ENCODE measurements at regions of chr1 and their contacts with region 1.

Region 1: DNA sequence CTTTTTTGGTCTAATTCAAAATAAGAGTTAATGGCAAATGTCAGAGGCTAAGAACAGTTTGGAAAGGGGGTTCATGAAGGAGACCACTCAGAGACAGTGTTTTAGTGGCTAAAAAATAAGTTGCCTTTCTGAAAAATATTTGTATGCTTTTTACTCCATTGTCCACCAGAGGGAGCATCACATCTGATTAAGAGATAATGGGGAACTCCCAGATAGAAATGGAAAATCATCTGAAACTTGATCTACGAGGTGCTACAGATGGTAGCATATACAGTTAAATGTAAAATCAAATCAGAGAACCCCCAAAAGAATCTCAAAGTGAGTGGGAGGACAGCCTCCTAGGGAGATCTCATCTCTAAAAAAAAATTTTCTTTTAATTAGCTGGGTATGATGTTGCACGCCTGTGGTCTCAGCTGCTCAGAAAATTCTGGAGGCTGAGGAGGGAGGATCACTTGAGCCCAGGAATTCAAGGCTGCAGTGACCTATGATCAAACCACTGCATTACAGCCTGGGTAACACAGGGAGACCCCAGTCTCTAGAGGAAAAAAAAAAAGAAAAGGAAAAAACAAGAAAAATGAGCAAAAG is 9.7 kb downstream of the SMYD3 start:
- DNase-seq: peak; percentile 81
- H3K4me3 Mint-ChIP-seq: no peak overlapping the region
- H3K27ac Mint-ChIP-seq: peak overlapping the region; percentile 46
- H3K4me1 Mint-ChIP-seq: peaks cover 7% of the 10 kb centered on the region
- H3K27me3 Mint-ChIP-seq: no peaks in the 10 kb centered on the region

Region 2: GRCh38 chr1:246012341-246012740 is 485.1 kb before region 1 on chr1:
- intact Hi-C with region 1: loop called (anchors 1 kb)
- DNase-seq: peak; percentile 58
- H3K4me3 Mint-ChIP-seq: no peak overlapping the region
- H3K27ac Mint-ChIP-seq: no peak overlapping the region
- H3K4me1 Mint-ChIP-seq: no peaks in the 10 kb centered on the region
- H3K27me3 Mint-ChIP-seq: no peaks in the 10 kb centered on the region

Region 3: DNA sequence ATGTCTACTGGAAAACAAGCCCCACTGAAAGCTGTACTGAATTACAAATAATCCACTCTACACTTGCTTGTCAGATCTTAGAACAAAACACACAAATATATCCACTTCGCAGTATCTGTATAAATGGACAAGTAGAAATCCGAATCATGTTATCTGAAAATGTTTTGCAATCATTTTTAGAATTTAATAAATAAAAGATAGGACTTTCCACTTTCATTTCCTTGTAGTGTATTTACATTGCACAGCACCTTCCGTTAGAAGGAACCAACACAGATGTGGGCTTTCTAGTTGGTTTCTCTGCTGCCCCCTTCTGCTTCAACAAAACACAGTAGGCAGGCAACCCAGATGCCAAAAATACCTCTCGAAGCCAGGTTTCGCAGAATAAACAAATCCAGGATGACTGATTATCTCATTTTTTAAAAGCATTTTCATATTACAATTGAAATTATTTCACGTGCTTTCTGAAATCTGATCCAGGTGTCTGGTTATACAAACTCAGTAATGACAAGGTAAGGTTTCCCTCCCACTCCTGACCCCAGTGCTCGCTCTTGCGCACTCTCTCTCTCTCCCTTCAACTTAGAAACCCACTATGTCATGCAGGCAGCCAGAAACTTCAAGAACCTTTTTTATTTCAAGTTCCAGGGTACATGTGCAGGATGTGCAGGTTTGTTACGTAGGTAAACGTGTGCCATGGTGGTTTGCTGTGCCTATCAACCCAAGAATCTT is 380.2 kb before region 1 on chr1:
- intact Hi-C with region 1: loop called (anchors 10 kb)
- DNase-seq: peak; percentile 74
- H3K4me3 Mint-ChIP-seq: peak overlapping the region; percentile 65
- H3K27ac Mint-ChIP-seq: peak overlapping the region; percentile 62
- H3K4me1 Mint-ChIP-seq: peaks cover 9% of the 10 kb centered on the region
- H3K27me3 Mint-ChIP-seq: no peaks in the 10 kb centered on the region

Region 4: GRCh38 chr1:246187834-246188372 is 309.5 kb before region 1 on chr1:
- intact Hi-C with region 1: no loop called
- DNase-seq: no peak
- H3K4me3 Mint-ChIP-seq: no peak overlapping the region
- H3K27ac Mint-ChIP-seq: no peak overlapping the region
- H3K4me1 Mint-ChIP-seq: no peaks in the 10 kb centered on the region
- H3K27me3 Mint-ChIP-seq: no peaks in the 10 kb centered on the region

Region 5: DNA sequence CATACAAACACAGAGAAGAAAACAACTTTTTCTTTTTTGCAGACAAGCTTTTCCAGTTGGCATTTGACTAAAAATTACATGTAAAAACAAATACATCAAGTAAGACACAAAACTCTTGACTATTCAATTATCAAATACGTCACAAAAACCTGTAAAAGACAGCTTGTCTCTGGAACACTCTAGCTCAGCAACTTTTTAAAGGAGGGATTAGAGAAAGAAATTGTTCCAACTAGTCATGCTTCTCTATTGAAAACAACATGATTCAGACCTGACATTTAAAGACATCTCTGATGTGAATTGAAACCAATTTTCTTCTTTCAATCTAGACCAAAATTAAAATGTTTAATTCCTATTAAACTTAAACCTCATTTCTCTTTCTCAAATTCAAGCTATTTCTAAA is 20.7 kb before region 1 on chr1:
- intact Hi-C with region 1: loop called (anchors 2 kb)
- DNase-seq: no peak
- H3K4me3 Mint-ChIP-seq: no peak overlapping the region
- H3K27ac Mint-ChIP-seq: no peak overlapping the region
- H3K4me1 Mint-ChIP-seq: peaks cover 9% of the 10 kb centered on the region
- H3K27me3 Mint-ChIP-seq: no peaks in the 10 kb centered on the region

Region 6: GRCh38 chr1:246699095-246699735 is 201.8 kb after region 1 on chr1:
- intact Hi-C with region 1: loop called (anchors 1 kb)
- DNase-seq: peak; percentile 93
- H3K4me3 Mint-ChIP-seq: peak overlapping the region; percentile 22
- H3K27ac Mint-ChIP-seq: peak overlapping the region; percentile 32
- H3K4me1 Mint-ChIP-seq: peaks cover 8% of the 10 kb centered on the region
- H3K27me3 Mint-ChIP-seq: no peaks in the 10 kb centered on the region

Region 7: DNA sequence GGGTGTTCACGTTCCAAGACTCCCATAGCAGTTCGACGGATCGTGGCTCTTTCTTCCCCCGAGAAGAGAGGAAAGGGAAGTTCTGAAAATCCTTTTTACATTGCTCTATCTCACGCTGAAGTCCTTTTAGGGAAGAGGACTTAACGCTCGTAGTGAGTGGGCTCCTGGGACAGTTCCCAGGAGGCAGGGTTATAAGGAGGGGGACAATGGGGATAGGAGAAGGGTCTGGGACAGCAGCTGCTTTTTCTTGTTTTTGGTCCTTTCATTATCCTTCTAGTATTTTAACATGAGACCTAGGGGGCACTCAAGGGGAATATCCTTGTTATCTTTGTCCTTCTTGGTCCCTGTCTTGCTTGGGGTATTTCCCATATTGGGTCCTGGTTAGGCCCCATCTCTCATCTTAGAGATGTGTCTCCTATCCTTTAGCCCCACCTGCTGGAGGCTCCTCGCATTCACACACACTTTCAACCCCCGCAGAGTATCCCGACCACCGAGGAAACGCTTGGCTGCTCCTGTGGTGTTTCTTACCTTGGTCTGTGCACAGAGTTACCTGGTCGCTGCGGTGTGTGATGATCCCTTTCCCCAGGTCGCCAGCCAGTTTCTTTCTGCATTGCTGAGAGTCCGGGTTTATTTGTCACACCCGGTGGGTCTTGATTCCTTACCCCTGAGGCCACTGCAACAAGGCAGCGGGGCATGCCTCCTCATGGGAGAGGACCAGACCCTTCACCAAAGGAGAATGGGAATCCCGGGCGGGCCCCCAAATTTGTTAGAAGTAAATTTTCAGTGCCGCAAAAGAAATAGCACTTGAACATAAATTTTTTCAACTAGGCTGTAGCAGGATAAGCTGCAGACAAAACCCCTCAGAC is 256.5 kb after region 1 on chr1:
- intact Hi-C with region 1: loop called (anchors 2 kb)
- DNase-seq: peak; percentile 87
- H3K4me3 Mint-ChIP-seq: no peak overlapping the region
- H3K27ac Mint-ChIP-seq: no peak overlapping the region
- H3K4me1 Mint-ChIP-seq: no peaks in the 10 kb centered on the region
- H3K27me3 Mint-ChIP-seq: no peaks in the 10 kb centered on the region

Measured in activated CD4-positive, alpha-beta T cell treated with anti-CD3 and anti-CD28 coated beads, Interleukin-2, amount 10 ng/mL, durations not matched to agents 24 days and 14 days (primary cell).